ENCODE measurements at regions of chr15 and their contacts with region 1.

Region 1: GRCh38 chr15:64681424-64682024 is 93.9 kb downstream of the RBPMS2 start:
- DNase-seq: peak in 2 of 9 experiments; percentile 26 to 38
- ATAC-seq: no peak
- H3K4me3 ChIP-seq: no peak overlapping the region
- H3K4me3 Mint-ChIP-seq: no peak overlapping the region
- H3K27ac ChIP-seq: no peak overlapping the region
- H3K27ac Mint-ChIP-seq: peak overlapping the region; percentile 62
- H3K4me1 ChIP-seq: no peaks in the 10 kb centered on the region
- H3K4me1 Mint-ChIP-seq: peaks cover 3% of the 10 kb centered on the region
- H3K27me3 ChIP-seq: no peaks in the 10 kb centered on the region
- H3K27me3 Mint-ChIP-seq: no peaks in the 10 kb centered on the region
- CTCF ChIP-seq: no peak

Region 2: GRCh38 chr15:64430000-64430735 is 251.4 kb before region 1 on chr15:
- CTCF ChIA-PET with region 1: interaction called, 9 read pairs
- POLR2A ChIA-PET with region 1: no interaction called
- intact Hi-C with region 1: loop called in 1 of 2 experiments (anchors 1 kb)
- DNase-seq: peak; percentile 1 to 88 (median 43)
- ATAC-seq: peak; percentile 89
- H3K4me3 ChIP-seq: no peak overlapping the region
- H3K4me3 Mint-ChIP-seq: peak overlapping the region; percentile 57
- H3K27ac ChIP-seq: peak overlapping the region; percentile 49 to 65
- H3K27ac Mint-ChIP-seq: peak overlapping the region; percentile 92
- H3K4me1 ChIP-seq: peaks cover 52% of the 10 kb centered on the region
- H3K4me1 Mint-ChIP-seq: peaks cover 44% of the 10 kb centered on the region
- H3K27me3 ChIP-seq: no peaks in the 10 kb centered on the region
- H3K27me3 Mint-ChIP-seq: no peaks in the 10 kb centered on the region
- CTCF ChIP-seq: no peak

Region 3: DNA sequence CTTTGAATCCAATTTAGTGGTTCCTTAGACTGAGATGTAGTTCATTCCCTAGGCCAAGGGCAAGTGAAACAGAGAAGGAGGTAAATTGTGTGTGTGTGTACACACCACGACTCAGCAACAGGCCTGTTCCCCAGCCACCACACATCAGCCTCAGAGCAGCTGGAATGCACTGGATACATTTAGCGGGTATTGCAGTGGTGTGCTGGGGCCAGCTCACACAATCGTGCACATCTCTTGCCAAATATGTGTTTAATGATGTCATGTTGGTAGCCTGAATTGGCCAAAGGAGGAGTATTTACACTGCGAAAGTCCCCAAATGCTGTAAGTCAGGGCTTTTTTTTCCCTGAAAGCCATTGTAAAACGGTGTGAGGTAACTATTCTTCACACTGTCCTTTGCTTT is 11.6 kb after region 1 on chr15:
- CTCF ChIA-PET with region 1: interaction called, 23 read pairs
- POLR2A ChIA-PET with region 1: no interaction called
- intact Hi-C with region 1: no loop called
- DNase-seq: peak in 1 of 9 experiments; percentile 18
- ATAC-seq: no peak
- H3K4me3 ChIP-seq: no peak overlapping the region
- H3K4me3 Mint-ChIP-seq: no peak overlapping the region
- H3K27ac ChIP-seq: no peak overlapping the region
- H3K27ac Mint-ChIP-seq: peak overlapping the region; percentile 74
- H3K4me1 ChIP-seq: peaks cover 6% of the 10 kb centered on the region
- H3K4me1 Mint-ChIP-seq: peaks cover 28% of the 10 kb centered on the region
- H3K27me3 ChIP-seq: no peaks in the 10 kb centered on the region
- H3K27me3 Mint-ChIP-seq: no peaks in the 10 kb centered on the region
- CTCF ChIP-seq: no peak

Region 4: DNA sequence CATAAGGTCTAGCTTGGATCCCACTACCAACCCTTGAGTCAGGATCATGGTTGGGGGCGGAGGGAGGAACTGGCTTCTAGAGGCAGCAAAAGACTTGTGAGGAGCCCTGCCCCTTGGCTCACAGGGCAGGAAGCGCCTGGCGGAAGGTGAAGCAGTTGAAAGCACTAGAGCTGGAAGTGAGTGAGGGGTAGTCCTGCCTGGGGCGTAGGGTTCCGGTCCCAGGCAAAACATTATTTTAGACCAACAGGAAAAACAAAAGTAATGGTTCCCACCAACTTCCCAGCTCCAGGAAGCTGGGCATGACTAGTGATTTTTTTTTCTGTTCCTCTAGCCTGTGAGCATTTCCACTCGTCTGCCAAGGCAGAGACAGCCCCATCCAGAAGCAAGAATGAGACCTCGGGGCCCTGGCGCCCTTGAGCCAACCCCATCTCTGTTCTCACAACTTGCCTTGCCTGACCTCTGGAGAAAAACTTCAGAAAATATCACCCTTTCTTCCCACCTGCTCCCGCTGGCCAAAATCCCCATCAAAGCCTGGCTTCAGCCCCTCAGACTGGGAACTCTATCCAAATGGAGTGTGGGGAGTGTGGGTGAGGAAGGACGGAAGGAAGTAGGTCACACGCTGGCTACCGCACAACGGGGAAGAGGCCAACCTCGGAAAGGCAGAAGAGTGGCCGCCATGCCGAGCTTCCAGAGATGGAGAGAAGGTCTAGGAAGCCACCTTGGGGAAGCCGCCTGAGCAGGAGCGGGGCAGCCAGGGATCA is 36.4 kb after region 1 on chr15:
- CTCF ChIA-PET with region 1: interaction called, 10 read pairs
- POLR2A ChIA-PET with region 1: interaction called, 4 read pairs
- intact Hi-C with region 1: no loop called
- DNase-seq: peak in 3 of 9 experiments; percentile 12 to 60 (median 37)
- ATAC-seq: peak; percentile 51
- H3K4me3 ChIP-seq: no peak overlapping the region
- H3K4me3 Mint-ChIP-seq: peak overlapping the region; percentile 15
- H3K27ac ChIP-seq: peak overlapping the region in 1 of 2 experiments; percentile 36
- H3K27ac Mint-ChIP-seq: peak overlapping the region; percentile 86
- H3K4me1 ChIP-seq: peaks cover 17% of the 10 kb centered on the region
- H3K4me1 Mint-ChIP-seq: peaks cover 18% of the 10 kb centered on the region
- H3K27me3 ChIP-seq: no peaks in the 10 kb centered on the region
- H3K27me3 Mint-ChIP-seq: no peaks in the 10 kb centered on the region
- CTCF ChIP-seq: no peak

Region 5: DNA sequence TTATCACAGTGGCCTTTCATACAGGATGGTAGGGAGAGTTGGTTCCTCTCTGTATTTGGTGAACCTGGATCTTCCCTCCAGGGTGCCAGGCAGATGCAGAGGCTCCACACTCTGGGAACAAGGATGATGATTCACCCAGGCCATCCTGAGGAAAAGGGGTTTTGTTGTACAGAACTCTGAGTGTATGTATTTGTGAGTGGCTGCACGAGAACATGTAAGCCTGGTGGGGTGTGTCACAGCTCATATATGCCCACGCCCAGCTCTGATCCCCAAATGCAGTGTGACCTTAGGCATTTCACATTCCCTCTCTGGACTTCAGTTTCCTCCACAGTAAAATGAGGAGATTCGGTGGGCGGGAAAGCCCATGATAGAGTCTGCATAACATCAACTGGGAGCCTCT is 541.4 kb after region 1 on chr15:
- CTCF ChIA-PET with region 1: no interaction called
- POLR2A ChIA-PET with region 1: no interaction called
- intact Hi-C with region 1: no loop called
- DNase-seq: no peak
- ATAC-seq: no peak
- H3K4me3 ChIP-seq: no peak overlapping the region
- H3K4me3 Mint-ChIP-seq: no peak overlapping the region
- H3K27ac ChIP-seq: no peak overlapping the region
- H3K27ac Mint-ChIP-seq: no peak overlapping the region
- H3K4me1 ChIP-seq: no peaks in the 10 kb centered on the region
- H3K4me1 Mint-ChIP-seq: no peaks in the 10 kb centered on the region
- H3K27me3 ChIP-seq: no peaks in the 10 kb centered on the region
- H3K27me3 Mint-ChIP-seq: no peaks in the 10 kb centered on the region
- CTCF ChIP-seq: no peak

Region 6: GRCh38 chr15:65292938-65293518 is 611.5 kb after region 1 on chr15:
- CTCF ChIA-PET with region 1: no interaction called
- POLR2A ChIA-PET with region 1: no interaction called
- intact Hi-C with region 1: no loop called
- DNase-seq: no peak
- ATAC-seq: no peak
- H3K4me3 ChIP-seq: no peak overlapping the region
- H3K4me3 Mint-ChIP-seq: no peak overlapping the region
- H3K27ac ChIP-seq: no peak overlapping the region
- H3K27ac Mint-ChIP-seq: no peak overlapping the region
- H3K4me1 ChIP-seq: peaks cover 24% of the 10 kb centered on the region
- H3K4me1 Mint-ChIP-seq: peaks cover 25% of the 10 kb centered on the region
- H3K27me3 ChIP-seq: no peaks in the 10 kb centered on the region
- H3K27me3 Mint-ChIP-seq: no peaks in the 10 kb centered on the region
- CTCF ChIP-seq: no peak

Measured in CD8-positive, alpha-beta T cell (primary cell).